ENCODE measurements at regions of chr15 and their contacts with region 1.

Region 1: GRCh38 chr15:60720493-60721256 is 241.7 kb upstream of the ICE2 start:
- DNase-seq: peak; percentile 59 to 77 (median 64)
- H3K4me3 ChIP-seq: peak overlapping the region; percentile 13 to 42
- H3K4me3 Mint-ChIP-seq: peak overlapping the region; percentile 71 to 88 (median 78)
- H3K27ac ChIP-seq: peak overlapping the region; percentile 72
- H3K27ac Mint-ChIP-seq: peak overlapping the region; percentile 83 to 98 (median 94)
- H3K4me1 ChIP-seq: peaks cover 62% of the 10 kb centered on the region
- H3K4me1 Mint-ChIP-seq: peaks cover 51 to 76% (median 57%) of the 10 kb centered on the region in 4 donors
- H3K27me3 ChIP-seq: no peaks in the 10 kb centered on the region
- H3K27me3 Mint-ChIP-seq: no peaks in the 10 kb centered on the region

Region 2: DNA sequence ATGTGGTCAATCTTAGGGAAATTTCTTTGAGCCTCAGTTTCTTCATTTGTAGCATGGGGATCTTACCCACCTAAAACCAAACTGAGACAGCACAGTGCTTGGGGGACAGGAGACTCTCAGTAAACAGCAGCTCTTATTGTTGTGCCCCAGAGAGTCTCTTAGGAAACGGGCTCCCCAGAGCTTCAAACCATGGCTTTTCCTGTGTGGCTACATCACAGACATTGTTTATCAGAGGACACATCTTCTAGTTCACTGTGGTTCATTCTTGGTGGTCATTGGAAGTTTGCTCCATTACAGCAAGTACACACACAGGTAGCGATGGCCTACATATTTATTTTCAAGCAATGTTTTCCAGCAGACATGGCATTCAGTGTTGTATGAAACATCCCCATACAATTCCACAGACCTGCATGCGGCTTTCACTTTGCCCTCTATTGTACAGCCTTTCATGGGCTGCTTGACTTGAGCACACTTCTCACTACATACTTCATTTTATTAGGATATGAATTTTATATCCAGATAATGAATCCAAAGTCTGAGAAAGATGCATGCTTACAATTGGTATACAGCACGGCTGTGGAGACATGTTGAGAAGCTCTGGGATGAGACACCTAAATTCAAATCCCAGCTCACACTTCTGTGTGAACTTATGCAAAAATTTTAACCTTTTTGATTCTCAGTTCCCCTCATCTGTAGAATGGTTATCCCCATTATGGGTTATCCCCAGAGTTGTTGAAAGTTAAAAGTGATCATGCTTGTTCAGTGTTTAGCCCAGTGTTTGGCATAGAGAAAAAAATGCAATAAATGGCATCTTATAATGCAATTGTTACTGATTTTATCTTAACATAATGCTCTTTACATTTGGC is 156.9 kb before region 1 on chr15:
- CTCF ChIA-PET with region 1: no interaction called
- POLR2A ChIA-PET with region 1: no interaction called
- intact Hi-C with region 1: no loop called
- DNase-seq: peak; percentile 69 to 83 (median 78)
- H3K4me3 ChIP-seq: peak overlapping the region in 1 of 2 donors; percentile 18
- H3K4me3 Mint-ChIP-seq: peak overlapping the region; percentile 5 to 79 (median 74)
- H3K27ac ChIP-seq: peak overlapping the region; percentile 53
- H3K27ac Mint-ChIP-seq: peak overlapping the region; percentile 90 to 97 (median 96)
- H3K4me1 ChIP-seq: peaks cover 90% of the 10 kb centered on the region
- H3K4me1 Mint-ChIP-seq: peaks cover 65 to 86% (median 76%) of the 10 kb centered on the region in 4 donors
- H3K27me3 ChIP-seq: no peaks in the 10 kb centered on the region
- H3K27me3 Mint-ChIP-seq: no peaks in the 10 kb centered on the region

Region 3: DNA sequence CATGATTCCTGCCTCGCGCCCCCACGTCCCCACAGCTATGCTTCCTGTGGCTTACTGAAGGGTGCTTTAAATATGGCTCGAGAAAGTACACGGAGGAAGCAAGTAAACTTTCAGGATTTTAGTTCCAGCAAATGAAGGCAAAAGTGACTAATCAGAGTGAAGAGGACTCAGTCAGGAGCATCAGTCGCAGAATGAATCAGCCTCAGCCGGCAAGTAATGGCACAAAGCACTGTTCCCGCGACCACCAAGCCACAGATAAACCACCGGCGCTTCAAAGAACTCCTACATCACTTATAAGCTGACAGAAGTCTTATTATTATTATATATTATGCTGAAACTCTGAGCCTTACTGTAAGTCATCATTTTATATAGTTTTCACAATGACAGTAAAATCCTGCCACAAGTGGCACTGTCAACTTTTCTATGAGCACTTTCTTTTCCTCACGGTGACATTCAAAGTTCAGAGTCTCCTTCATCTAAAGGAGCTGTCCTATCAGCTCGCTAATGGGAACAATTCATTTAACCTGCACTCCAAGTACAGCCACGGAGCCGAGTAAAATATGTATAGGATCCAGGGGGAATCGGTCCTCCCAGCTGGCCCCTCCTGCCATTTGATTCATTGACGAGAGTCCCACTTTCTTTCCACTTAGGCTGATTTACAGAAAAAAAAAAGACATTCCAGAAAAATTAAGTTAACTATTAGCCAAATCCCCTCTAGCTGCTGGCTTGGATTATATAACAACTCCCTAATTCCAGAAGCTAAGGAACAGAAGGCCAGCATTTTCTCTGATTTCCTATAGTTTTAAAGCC is 24.8 kb before region 1 on chr15:
- CTCF ChIA-PET with region 1: interaction called, 6 read pairs
- POLR2A ChIA-PET with region 1: interaction called, 181 read pairs
- intact Hi-C with region 1: no loop called
- DNase-seq: peak in 4 of 5 donors; percentile 18 to 79 (median 29)
- H3K4me3 ChIP-seq: peak overlapping the region; percentile 29 to 43
- H3K4me3 Mint-ChIP-seq: peak overlapping the region; percentile 48 to 87 (median 84)
- H3K27ac ChIP-seq: peak overlapping the region; percentile 37
- H3K27ac Mint-ChIP-seq: peak overlapping the region; percentile 55 to 95 (median 92)
- H3K4me1 ChIP-seq: peaks cover 67% of the 10 kb centered on the region
- H3K4me1 Mint-ChIP-seq: peaks cover 68 to 84% (median 78%) of the 10 kb centered on the region in 4 donors
- H3K27me3 ChIP-seq: no peaks in the 10 kb centered on the region
- H3K27me3 Mint-ChIP-seq: no peaks in the 10 kb centered on the region

Region 4: DNA sequence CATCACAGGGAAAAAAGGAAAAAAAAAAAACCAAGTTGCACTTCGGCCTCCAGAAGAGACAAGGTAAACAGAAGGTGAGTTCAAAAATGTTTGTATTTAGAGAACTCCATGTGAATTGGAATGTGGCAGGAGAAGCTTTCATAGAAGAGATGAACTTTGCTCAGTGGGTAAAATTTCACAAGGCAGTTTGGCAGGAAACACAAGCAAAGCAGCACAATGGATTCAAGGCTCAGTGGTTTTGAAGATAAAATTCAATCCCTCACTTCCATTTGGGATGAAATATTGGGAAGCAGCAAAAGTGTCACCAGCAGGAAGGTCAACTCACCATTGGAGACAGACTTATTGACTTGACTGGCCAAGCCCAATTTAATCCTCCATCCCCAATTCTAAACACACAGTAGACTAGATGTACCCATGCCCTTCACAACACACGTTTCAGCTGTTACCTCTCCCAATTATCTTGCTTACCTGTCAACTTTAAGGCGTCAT is 14.9 kb after region 1 on chr15:
- CTCF ChIA-PET with region 1: interaction called, 10 read pairs
- POLR2A ChIA-PET with region 1: interaction called, 26 read pairs
- intact Hi-C with region 1: loop called (anchors 1 kb)
- DNase-seq: no peak
- H3K4me3 ChIP-seq: no peak overlapping the region
- H3K4me3 Mint-ChIP-seq: no peak overlapping the region
- H3K27ac ChIP-seq: no peak overlapping the region
- H3K27ac Mint-ChIP-seq: peak overlapping the region in 1 of 7 donors; percentile 71
- H3K4me1 ChIP-seq: peaks cover 25% of the 10 kb centered on the region
- H3K4me1 Mint-ChIP-seq: peaks cover 20 to 31% (median 26%) of the 10 kb centered on the region in 4 donors
- H3K27me3 ChIP-seq: no peaks in the 10 kb centered on the region
- H3K27me3 Mint-ChIP-seq: no peaks in the 10 kb centered on the region

Region 5: GRCh38 chr15:60798821-60799220 is 78.1 kb after region 1 on chr15:
- CTCF ChIA-PET with region 1: interaction called, 4 read pairs
- POLR2A ChIA-PET with region 1: interaction called, 21 read pairs
- intact Hi-C with region 1: no loop called
- DNase-seq: peak in 1 of 5 donors; percentile 57
- H3K4me3 ChIP-seq: no peak overlapping the region
- H3K4me3 Mint-ChIP-seq: peak overlapping the region in 5 of 8 donors; percentile 25 to 55 (median 48)
- H3K27ac ChIP-seq: peak overlapping the region; percentile 56
- H3K27ac Mint-ChIP-seq: peak overlapping the region; percentile 87 to 98 (median 93)
- H3K4me1 ChIP-seq: peaks cover 95% of the 10 kb centered on the region
- H3K4me1 Mint-ChIP-seq: peaks cover 67 to 97% (median 85%) of the 10 kb centered on the region in 4 donors
- H3K27me3 ChIP-seq: no peaks in the 10 kb centered on the region
- H3K27me3 Mint-ChIP-seq: no peaks in the 10 kb centered on the region